Head of caudate nucleus (tissue), 42 donors: ENCODE measurements at regions of chr13 and their contacts with region 1.

Region 1: DNA sequence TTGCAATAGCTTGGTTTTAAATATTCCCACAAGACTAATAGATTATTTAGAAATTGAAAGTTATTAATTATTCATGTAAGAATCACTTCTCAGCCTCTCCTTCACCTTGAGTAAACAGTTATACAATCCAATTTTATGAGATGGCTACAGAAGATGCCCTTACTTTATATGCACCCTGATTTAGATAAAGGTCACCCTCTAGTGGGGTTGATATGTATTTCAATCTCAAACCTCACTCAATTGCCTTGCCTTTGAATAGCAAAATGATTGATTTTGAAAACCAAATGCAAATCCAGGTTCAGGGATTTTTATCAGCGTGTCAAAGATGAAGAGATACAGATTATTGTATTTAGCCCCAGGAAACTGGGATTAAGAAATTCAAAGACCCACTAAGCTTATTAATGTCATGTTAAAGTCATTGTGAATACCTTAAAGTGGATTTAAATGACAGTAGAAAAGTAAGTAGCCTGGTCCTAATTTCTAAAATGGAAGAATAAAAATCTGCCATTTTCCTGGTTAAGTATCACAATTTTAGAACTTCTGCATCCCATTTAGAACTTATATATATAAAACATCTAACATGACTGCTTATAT is 305.1 kb downstream of the ITGBL1 start:
- DNase-seq: peak in 2 of 42 donors; percentile 9 to 28

Region 2: GRCh38 chr13:101144808-101145419 is 612.6 kb before region 1 on chr13:
- intact Hi-C with region 1: loop called (anchors 5 kb)
- DNase-seq: peak in 9 of 42 donors; percentile 17 to 63 (median 33)

Region 3: GRCh38 chr13:101514788-101515187 is 242.8 kb before region 1 on chr13:
- intact Hi-C with region 1: loop called (anchors 10 kb)
- DNase-seq: peak in 15 of 42 donors; percentile 12 to 79 (median 48)

Region 4: GRCh38 chr13:102055090-102055779 is 297.7 kb after region 1 on chr13:
- intact Hi-C with region 1: no loop called
- DNase-seq: no peak